ENCODE measurements at regions of chr10 and their contacts with region 1.

Region 1: GRCh38 chr10:22244001-22244400 is 26.2 kb upstream of the EBLN1 start:
- DNase-seq: peak; percentile 11
- H3K4me3 Mint-ChIP-seq: no peak overlapping the region
- H3K27ac Mint-ChIP-seq: no peak overlapping the region
- H3K4me1 Mint-ChIP-seq: peaks cover 23% of the 10 kb centered on the region
- H3K27me3 Mint-ChIP-seq: no peaks in the 10 kb centered on the region
- CTCF ChIP-seq: no peak

Region 2: GRCh38 chr10:22003079-22003913 is 240.7 kb before region 1 on chr10 and contains the start of gene DNAJC1:
- CTCF ChIA-PET with region 1: no interaction called
- intact Hi-C with region 1: loop called (anchors 10 kb)
- DNase-seq: peak; percentile 98
- H3K4me3 Mint-ChIP-seq: peak within 1 kb of the TSS; percentile 79
- H3K27ac Mint-ChIP-seq: peak within 1 kb of the TSS; percentile 82
- H3K4me1 Mint-ChIP-seq: peaks cover 12% of the 10 kb centered on the region
- H3K27me3 Mint-ChIP-seq: peaks cover 19% of the 10 kb centered on the region
- CTCF ChIP-seq: no peak
- total RNA-seq, gene DNAJC1: 15.9 and 17.0 TPM in 2 replicates

Region 3: DNA sequence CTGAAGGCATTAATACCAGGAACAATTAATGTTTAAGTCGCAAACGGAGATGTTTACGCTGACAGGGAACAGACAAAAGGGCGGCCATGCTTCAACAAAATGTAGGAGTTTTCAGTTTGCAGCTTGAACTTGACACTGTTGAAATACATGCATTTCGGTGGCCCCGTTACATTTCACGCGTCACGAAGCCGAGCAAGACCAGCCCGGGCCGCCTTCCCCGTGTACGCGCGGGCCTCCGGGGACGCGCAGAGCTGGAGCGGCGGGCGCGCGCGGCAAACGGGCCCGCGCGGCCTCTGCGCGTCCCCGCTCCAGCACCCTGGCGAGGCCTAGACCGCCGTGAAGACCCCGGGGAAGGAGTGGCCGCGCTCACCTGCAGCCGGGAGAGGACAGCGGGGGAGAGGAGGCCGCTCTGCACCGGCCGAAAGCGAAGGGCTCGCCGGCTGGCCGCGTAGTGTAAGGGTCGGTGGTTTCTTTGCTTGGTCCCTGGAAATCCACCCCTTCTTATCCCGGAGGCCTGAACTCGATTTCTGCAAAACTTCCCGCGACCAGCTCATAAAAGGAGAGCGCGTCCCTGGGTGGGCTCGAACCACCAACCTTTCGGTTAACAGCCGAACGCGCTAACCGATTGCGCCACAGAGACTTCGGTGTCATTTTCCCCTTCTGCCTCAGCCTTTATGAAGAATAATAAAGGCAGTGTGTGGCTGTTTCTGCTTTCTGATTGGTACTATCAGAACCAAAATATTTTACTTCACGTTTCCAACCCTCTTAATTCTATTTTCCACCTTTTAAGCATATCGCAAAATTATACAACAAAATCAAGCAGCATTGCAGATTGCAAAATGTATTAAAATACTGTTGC is 14.8 kb before region 1 on chr10:
- CTCF ChIA-PET with region 1: no interaction called
- intact Hi-C with region 1: loop called (anchors 2 kb)
- DNase-seq: peak; percentile 88
- H3K4me3 Mint-ChIP-seq: peak overlapping the region; percentile 76
- H3K27ac Mint-ChIP-seq: peak overlapping the region; percentile 95
- H3K4me1 Mint-ChIP-seq: no peaks in the 10 kb centered on the region
- H3K27me3 Mint-ChIP-seq: no peaks in the 10 kb centered on the region
- CTCF ChIP-seq: no peak

Measured in Calu3 (cell line).